ENCODE measurements at regions of chr3 and their contacts with region 1.

Region 1: DNA sequence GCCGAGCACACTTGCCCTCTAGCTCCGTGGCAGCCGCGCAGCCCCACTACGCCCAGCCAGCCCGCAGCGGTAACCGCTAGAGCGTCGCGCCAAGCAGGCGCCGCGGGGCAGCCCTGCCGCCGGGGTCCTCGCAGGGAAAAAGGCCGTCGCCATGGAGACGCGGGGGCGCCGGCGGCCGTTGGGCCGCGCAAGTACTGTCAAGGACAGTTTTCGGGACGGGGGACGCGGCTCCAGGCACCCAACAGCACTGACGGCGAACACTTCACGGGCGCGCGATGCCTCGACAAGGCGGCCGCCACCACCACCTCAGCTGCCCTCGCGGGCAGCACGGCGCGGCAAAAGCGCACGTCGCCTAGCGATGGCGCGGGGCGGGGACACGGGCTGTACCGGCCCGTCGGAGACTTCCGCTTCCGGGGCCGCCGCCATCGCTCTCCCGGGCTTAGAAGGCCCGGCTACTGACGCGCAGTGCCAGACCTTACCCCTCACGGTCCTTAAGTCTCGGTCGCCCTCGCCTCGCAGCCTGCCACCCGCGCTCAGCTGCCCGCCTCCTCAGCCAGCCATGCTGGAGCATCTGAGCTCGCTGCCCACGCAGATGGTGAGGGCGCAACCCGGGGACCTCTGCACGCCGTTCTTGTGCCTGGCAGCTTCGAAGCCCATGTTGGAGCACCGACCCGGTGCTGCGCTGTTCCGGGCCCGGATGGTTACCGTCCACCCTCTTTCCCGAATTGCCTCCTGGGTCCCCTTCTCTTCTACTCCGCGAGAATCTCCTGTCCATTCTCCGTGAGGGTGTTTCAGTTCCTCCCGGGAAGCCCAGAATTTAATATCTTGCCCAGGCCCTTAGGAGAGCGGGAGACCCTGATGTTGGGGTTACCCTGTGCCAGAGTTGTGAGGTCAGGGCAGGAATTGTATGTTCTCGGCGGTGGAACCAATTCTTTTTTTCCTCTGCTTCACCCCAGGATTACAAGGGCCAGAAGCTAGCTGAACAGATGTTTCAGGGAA is at the starts of genes GLT8D1 and SPCS1:
- DNase-seq: peak; percentile 70 to 94 (median 82)
- ATAC-seq: peak; percentile 89
- H3K4me3 ChIP-seq: peak within 1 kb of the TSS; percentile 98
- H3K4me3 Mint-ChIP-seq: peak within 1 kb of the TSS; percentile 96
- H3K27ac ChIP-seq: peak within 1 kb of the TSS; percentile 86 to 90
- H3K27ac Mint-ChIP-seq: peak within 1 kb of the TSS; percentile 98
- H3K4me1 ChIP-seq: peaks cover 39% of the 10 kb centered on the region
- H3K4me1 Mint-ChIP-seq: peaks cover 40% of the 10 kb centered on the region
- H3K27me3 ChIP-seq: no peaks in the 10 kb centered on the region
- H3K27me3 Mint-ChIP-seq: no peaks in the 10 kb centered on the region
- CTCF ChIP-seq: no peak
- total RNA-seq, gene GLT8D1: 8.4 to 10.8 TPM
- total RNA-seq, gene SPCS1: 60.0 to 64.5 TPM

Region 2: DNA sequence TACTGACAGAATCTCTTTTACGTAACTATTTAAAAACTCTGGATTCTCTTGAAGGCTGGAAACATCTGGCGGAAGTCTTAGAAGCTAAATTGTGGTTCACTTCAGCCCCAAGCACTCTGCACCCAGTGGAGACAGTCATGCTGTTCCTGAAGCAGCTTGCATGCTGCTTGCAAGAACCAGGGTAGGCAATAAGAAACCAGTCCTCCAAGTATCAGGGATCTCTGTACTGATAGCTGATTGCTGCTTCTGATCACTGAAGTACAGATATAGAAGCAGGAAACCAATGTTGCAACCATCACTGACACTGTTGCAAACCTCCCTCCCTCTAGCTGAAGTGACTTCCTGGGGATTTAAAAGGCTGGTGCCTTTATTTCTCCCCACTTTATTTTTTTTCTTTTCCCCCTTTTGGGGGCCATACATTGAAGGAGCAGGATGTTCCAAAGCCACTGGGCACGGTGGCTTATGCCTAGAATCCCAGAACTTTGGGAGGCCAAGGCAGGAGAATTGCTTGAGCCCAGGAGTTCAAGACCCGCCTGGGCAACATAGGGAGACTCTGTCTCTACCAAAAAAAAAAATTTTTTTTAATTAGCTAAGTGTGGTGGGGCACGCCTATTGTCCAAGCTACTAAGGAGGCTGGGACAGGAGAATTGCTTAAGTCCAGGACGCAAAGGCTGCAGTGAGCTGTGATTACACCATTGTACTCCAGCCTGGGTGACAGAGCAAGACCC is 15.2 kb after region 1 on chr3:
- CTCF ChIA-PET with region 1: no interaction called
- POLR2A ChIA-PET with region 1: interaction called, 23 read pairs
- intact Hi-C with region 1: no loop called
- DNase-seq: peak in 8 of 14 experiments; percentile 3 to 61 (median 27)
- ATAC-seq: peak; percentile 89
- H3K4me3 ChIP-seq: no peak overlapping the region
- H3K4me3 Mint-ChIP-seq: peak overlapping the region; percentile 13
- H3K27ac ChIP-seq: peak overlapping the region in 1 of 2 donors; percentile 63
- H3K27ac Mint-ChIP-seq: peak overlapping the region; percentile 78
- H3K4me1 ChIP-seq: peaks cover 21% of the 10 kb centered on the region
- H3K4me1 Mint-ChIP-seq: peaks cover 31% of the 10 kb centered on the region
- H3K27me3 ChIP-seq: no peaks in the 10 kb centered on the region
- H3K27me3 Mint-ChIP-seq: no peaks in the 10 kb centered on the region
- CTCF ChIP-seq: no peak

Region 3: DNA sequence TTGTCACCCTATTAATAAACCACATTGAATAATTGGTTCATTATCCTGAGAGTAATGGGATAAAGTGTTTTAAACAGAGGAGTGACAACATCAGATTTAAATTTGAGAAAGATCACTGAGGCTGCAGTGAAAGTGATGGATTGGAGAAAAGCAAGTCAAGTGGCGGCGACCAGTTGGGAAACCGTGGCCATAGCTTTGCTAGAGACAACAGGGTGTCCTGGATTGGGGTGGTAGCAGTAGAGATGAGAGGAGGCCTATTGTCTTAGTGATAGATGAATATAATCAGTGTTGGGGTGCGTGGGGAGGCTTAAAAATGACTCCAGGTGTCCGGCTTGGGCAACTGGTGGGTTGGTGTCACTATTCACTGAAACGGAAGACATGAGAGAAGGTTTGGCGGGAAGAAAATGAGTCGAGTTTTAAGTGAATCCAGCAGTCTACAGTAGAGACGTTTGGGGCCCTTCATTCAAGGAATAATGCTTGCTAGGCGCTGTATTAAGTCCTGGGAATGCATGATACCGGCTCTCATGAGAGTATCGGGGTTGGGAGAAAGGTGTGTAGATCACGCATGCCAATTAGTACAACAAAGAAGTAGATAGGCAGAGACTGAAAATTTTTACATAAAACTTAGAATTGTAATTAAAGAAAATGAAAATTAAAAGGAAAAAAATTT is 63.9 kb after region 1 on chr3:
- CTCF ChIA-PET with region 1: no interaction called
- POLR2A ChIA-PET with region 1: interaction called, 3 read pairs
- intact Hi-C with region 1: loop called in 1 of 2 experiments (anchors 2 kb)
- DNase-seq: no peak
- ATAC-seq: no peak
- H3K4me3 ChIP-seq: peak overlapping the region; percentile 83
- H3K4me3 Mint-ChIP-seq: peak overlapping the region; percentile 96
- H3K27ac ChIP-seq: peak overlapping the region in 1 of 2 donors; percentile 72
- H3K27ac Mint-ChIP-seq: peak overlapping the region; percentile 73
- H3K4me1 ChIP-seq: peaks cover 14% of the 10 kb centered on the region
- H3K4me1 Mint-ChIP-seq: peaks cover 17% of the 10 kb centered on the region
- H3K27me3 ChIP-seq: no peaks in the 10 kb centered on the region
- H3K27me3 Mint-ChIP-seq: no peaks in the 10 kb centered on the region
- CTCF ChIP-seq: no peak

Region 4: GRCh38 chr3:53009826-53010539 is 304.0 kb after region 1 on chr3:
- CTCF ChIA-PET with region 1: no interaction called
- POLR2A ChIA-PET with region 1: no interaction called
- intact Hi-C with region 1: no loop called
- DNase-seq: no peak
- ATAC-seq: no peak
- H3K4me3 ChIP-seq: no peak overlapping the region
- H3K4me3 Mint-ChIP-seq: no peak overlapping the region
- H3K27ac ChIP-seq: no peak overlapping the region
- H3K27ac Mint-ChIP-seq: no peak overlapping the region
- H3K4me1 ChIP-seq: peaks cover 13% of the 10 kb centered on the region
- H3K4me1 Mint-ChIP-seq: peaks cover 61% of the 10 kb centered on the region
- H3K27me3 ChIP-seq: no peaks in the 10 kb centered on the region
- H3K27me3 Mint-ChIP-seq: no peaks in the 10 kb centered on the region
- CTCF ChIP-seq: no peak